Left cardiac atrium (tissue), 4 donors: ENCODE measurements at regions of chr12 and their contacts with region 1.

Region 1: DNA sequence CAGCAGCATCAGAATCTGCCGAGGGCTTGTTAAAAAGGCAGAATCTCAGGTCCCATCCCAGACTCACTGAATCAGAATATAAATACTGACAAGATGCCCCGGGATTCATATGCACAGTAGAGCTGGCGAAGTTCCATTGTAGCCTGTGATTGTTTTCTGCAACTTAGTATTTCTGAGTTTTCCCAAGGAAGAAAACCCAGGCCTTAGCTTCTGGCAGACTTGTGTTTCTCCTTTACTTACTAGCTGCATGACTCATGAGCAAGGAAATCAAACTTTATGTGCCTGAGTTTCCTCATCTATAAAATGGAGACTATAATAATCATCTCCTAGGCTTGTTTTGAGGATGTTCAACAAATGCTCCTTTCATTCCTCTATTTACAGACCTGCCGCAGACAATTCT is 278.5 kb upstream of the PLEKHG7 start:
- DNase-seq: no peak
- ATAC-seq: no peak

Region 2: GRCh38 chr12:92466391-92467305 is 42.3 kb after region 1 on chr12:
- intact Hi-C with region 1: loop called (anchors 5 kb)
- DNase-seq: no peak
- ATAC-seq: peak; percentile 32 to 33

Region 3: GRCh38 chr12:92629349-92630065 is 205.2 kb after region 1 on chr12:
- intact Hi-C with region 1: no loop called
- DNase-seq: no peak
- ATAC-seq: no peak